ENCODE measurements at regions of chr6 and their contacts with region 1.

Region 1: DNA sequence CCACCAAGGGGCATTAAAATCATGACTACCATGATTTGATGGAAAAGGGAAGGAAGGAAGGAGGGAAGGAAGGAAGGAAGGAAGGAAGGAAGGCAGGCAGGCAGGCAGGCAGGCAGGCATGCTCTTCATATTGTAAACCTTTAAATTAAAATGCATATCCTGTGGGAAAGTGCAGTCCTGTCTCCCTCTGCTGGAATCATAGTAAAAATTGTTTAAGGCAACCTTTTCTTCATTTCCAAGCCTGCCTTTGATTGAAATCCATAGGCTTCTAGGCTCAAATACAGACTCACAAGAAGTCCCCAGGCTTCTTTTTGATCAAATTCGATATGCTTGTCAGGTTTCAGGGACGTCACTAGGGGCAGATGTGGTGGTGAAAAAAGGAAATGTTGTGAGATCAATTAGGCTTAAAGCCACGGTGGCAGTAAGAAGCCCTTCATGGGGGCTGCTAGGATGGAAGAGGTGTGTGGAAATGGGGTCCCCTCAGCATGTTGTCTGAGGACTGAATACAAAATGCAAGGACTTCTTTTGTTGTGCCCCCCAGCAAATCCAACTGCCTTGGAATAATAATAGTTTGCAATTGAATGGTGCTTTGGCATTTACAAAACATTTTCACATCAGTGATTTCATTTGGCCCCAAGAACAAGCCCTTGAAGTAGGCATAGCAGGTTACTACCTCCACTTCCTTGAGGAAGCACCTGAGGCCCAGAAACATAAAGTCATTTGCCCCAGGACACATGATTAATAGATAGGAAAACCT is 25.6 kb upstream of the GABRR1 start:
- DNase-seq: no peak
- H3K4me3 ChIP-seq: no peak overlapping the region
- H3K27ac ChIP-seq: no peak overlapping the region
- H3K4me1 ChIP-seq: no peaks in the 10 kb centered on the region
- H3K27me3 ChIP-seq: no peaks in the 10 kb centered on the region
- CTCF ChIP-seq: peak; percentile 49 to 72

Region 2: GRCh38 chr6:88823998-88824397 is 418.8 kb before region 1 on chr6:
- intact Hi-C with region 1: no loop called
- DNase-seq: no peak
- H3K4me3 ChIP-seq: no peak overlapping the region
- H3K27ac ChIP-seq: no peak overlapping the region
- H3K4me1 ChIP-seq: no peaks in the 10 kb centered on the region
- H3K27me3 ChIP-seq: no peaks in the 10 kb centered on the region
- CTCF ChIP-seq: no peak

Region 3: GRCh38 chr6:88982720-88983119 is 260.0 kb before region 1 on chr6:
- intact Hi-C with region 1: loop called (anchors 5 kb)
- DNase-seq: peak; percentile 81 to 83
- H3K4me3 ChIP-seq: no peak overlapping the region
- H3K27ac ChIP-seq: no peak overlapping the region
- H3K4me1 ChIP-seq: peaks cover 0 to 7% (median 4%) of the 10 kb centered on the region in 4 donors
- H3K27me3 ChIP-seq: no peaks in the 10 kb centered on the region
- CTCF ChIP-seq: peak; percentile 59 to 88

Measured in tibial artery (tissue), 4 donors.